ENCODE measurements at regions of chr4 and their contacts with region 1.

Region 1: DNA sequence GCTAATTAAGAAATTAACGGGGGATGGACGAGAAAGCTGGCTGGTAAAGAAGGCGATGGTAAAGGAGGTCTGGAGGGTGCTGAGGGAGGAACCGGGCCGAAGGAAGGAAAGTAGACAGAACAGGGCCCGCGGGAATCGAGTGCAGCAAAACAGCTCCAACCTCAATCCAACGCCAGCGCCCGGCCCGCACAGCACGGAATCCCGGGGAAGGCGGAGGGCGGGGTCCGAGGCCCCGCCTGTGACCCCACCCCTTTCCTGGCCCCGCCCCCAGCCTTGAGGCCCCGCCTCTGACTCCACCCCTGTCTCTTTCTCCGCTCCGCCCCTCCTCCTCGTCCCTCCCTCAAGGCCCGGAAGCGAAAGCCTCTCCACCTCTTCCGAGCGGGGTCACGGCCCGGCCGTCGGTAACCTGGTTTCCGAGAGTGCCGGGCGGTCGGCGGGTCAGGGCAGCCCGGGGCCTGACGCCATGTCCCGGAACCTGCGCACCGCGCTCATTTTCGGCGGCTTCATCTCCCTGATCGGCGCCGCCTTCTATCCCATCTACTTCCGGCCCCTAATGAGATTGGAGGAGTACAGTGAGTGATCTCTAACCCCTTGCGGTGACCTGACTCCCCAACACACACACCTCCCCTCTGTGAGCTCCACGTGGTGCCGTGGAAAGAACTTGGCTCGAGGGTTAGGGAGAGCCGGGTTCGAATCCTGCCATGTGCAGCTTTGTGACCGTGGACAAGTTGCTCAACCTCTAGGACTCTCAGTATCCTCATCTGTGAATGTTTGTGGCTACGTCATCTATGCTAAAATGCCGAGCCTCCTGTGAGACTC is at the start of gene SMIM20:
- DNase-seq: peak; percentile 90 to 92
- ATAC-seq: peak; percentile 98 to 99 (median 99)
- H3K4me3 ChIP-seq: peak within 1 kb of the TSS; percentile 29 to 83 (median 68)
- H3K27ac ChIP-seq: peak within 1 kb of the TSS; percentile 61 to 93 (median 86)
- H3K4me1 ChIP-seq: peaks cover 0 to 26% (median 17%) of the 10 kb centered on the region in 9 donors
- H3K27me3 ChIP-seq: no peaks in the 10 kb centered on the region
- CTCF ChIP-seq: peak in 1 of 9 donors; percentile 5
- total RNA-seq, gene SMIM20: 31.6 to 48.5 (median 44.1) TPM

Region 2: GRCh38 chr4:25842229-25842845 is 71.7 kb before region 1 on chr4:
- intact Hi-C with region 1: no loop called
- DNase-seq: no peak
- ATAC-seq: no peak
- H3K4me3 ChIP-seq: no peak overlapping the region
- H3K27ac ChIP-seq: no peak overlapping the region
- H3K4me1 ChIP-seq: peaks cover 0 to 33% (median 12%) of the 10 kb centered on the region in 9 donors
- H3K27me3 ChIP-seq: no peaks in the 10 kb centered on the region
- CTCF ChIP-seq: peak in 2 of 9 donors; percentile 3 to 13

Region 3: GRCh38 chr4:25862411-25863346 is 51.4 kb before region 1 on chr4 and contains the start of gene SEL1L3:
- intact Hi-C with region 1: loop called in 5 of 10 experiments (anchors 2 to 5 kb)
- DNase-seq: peak in 1 of 2 donors; percentile 48
- ATAC-seq: peak in 6 of 8 donors; percentile 8 to 63 (median 23)
- H3K4me3 ChIP-seq: peak within 1 kb of the TSS; percentile 30 to 96 (median 79)
- H3K27ac ChIP-seq: peak within 1 kb of the TSS in 9 of 10 donors; percentile 33 to 90 (median 71)
- H3K4me1 ChIP-seq: peaks cover 0 to 42% (median 36%) of the 10 kb centered on the region in 9 donors
- H3K27me3 ChIP-seq: no peaks in the 10 kb centered on the region
- CTCF ChIP-seq: no peak
- total RNA-seq, gene SEL1L3: 2.5 to 9.8 (median 3.7) TPM

Region 4: GRCh38 chr4:25981749-25982148 is 67.7 kb after region 1 on chr4:
- intact Hi-C with region 1: no loop called
- DNase-seq: peak; percentile 39 to 41
- ATAC-seq: peak in 6 of 8 donors; percentile 73 to 96 (median 94)
- H3K4me3 ChIP-seq: no peak overlapping the region
- H3K27ac ChIP-seq: peak overlapping the region in 1 of 10 donors; percentile 44
- H3K4me1 ChIP-seq: peaks cover 0 to 7% (median 0%) of the 10 kb centered on the region in 9 donors
- H3K27me3 ChIP-seq: no peaks in the 10 kb centered on the region
- CTCF ChIP-seq: no peak

Region 5: GRCh38 chr4:26081795-26082498 is 167.9 kb after region 1 on chr4:
- intact Hi-C with region 1: loop called in 1 of 10 experiments (anchors 10 kb)
- DNase-seq: no peak
- ATAC-seq: peak in 7 of 8 donors; percentile 44 to 66 (median 53)
- H3K4me3 ChIP-seq: no peak overlapping the region
- H3K27ac ChIP-seq: peak overlapping the region in 1 of 10 donors; percentile 34
- H3K4me1 ChIP-seq: peaks cover 0 to 52% (median 0%) of the 10 kb centered on the region in 9 donors
- H3K27me3 ChIP-seq: peaks cover 0 to 11% (median 2%) of the 10 kb centered on the region in 7 donors
- CTCF ChIP-seq: peak; percentile 60 to 82 (median 72)